Ovary (tissue), 10 donors: ENCODE measurements at regions of chr7 and their contacts with region 1.

Region 1: DNA sequence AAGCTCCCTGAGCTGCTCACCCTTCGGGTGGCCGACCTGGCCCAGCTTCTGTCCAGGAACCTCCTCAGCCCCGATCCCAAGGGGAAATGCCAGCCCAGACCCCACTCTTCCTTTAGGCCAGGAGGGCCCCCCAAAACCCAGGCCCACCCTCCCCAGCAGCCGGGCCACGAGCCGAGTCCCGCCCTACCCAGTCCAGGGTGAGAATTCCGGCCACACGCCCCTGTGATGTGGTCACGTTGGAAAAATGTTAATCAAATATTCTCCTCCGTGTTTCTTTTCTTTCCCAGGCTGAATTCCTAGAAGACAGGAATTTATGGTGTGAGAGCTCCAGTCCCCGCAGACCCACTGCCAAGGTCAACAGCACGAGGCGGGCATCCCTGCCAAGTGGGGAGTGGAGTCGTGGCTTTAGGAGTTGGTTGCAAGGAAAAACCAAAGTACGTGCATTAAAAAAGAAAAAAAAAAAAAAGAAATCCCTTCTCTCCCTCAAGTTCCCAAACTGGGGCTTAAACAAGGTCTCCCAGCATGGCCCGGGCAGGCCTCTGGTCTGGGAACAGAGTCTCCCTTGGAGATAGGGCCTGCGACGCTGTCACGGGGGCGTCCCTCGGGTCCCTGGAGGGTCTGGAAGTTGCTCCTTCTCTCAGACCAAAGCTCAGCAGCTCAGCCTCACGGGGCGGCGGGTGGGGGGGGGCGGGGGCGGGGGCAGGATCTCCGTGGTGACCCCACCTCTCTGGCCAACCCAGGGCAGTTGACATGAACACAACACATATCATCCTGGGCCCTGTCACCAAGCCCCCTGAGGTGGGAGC is 28.2 kb upstream of the ELN start:
- DNase-seq: peak; percentile 36 to 77 (median 61)
- H3K4me3 ChIP-seq: no peak overlapping the region
- H3K27ac ChIP-seq: peak overlapping the region in 1 of 2 donors; percentile 49
- H3K4me1 ChIP-seq: peaks cover 12% of the 10 kb centered on the region
- H3K27me3 ChIP-seq: no peaks in the 10 kb centered on the region
- CTCF ChIP-seq: no peak
- EP300 ChIP-seq: no peak
- POLR2A ChIP-seq: no peak

Region 2: GRCh38 chr7:73703757-73704639 is 295.8 kb before region 1 on chr7:
- intact Hi-C with region 1: no loop called
- DNase-seq: peak; percentile 78 to 86 (median 80)
- H3K4me3 ChIP-seq: peak overlapping the region; percentile 28
- H3K27ac ChIP-seq: peak overlapping the region in 1 of 2 donors; percentile 73
- H3K4me1 ChIP-seq: peaks cover 12% of the 10 kb centered on the region
- H3K27me3 ChIP-seq: no peaks in the 10 kb centered on the region
- CTCF ChIP-seq: no peak
- EP300 ChIP-seq: no peak
- POLR2A ChIP-seq: no peak

Region 3: GRCh38 chr7:73894733-73895551 is 104.9 kb before region 1 on chr7:
- intact Hi-C with region 1: loop called in 1 of 4 experiments (anchors 10 kb)
- DNase-seq: peak in 2 of 5 donors; percentile 49 to 62
- H3K4me3 ChIP-seq: no peak overlapping the region
- H3K27ac ChIP-seq: no peak overlapping the region
- H3K4me1 ChIP-seq: peaks cover 4% of the 10 kb centered on the region
- H3K27me3 ChIP-seq: no peaks in the 10 kb centered on the region
- CTCF ChIP-seq: no peak
- EP300 ChIP-seq: no peak
- POLR2A ChIP-seq: no peak

Region 4: DNA sequence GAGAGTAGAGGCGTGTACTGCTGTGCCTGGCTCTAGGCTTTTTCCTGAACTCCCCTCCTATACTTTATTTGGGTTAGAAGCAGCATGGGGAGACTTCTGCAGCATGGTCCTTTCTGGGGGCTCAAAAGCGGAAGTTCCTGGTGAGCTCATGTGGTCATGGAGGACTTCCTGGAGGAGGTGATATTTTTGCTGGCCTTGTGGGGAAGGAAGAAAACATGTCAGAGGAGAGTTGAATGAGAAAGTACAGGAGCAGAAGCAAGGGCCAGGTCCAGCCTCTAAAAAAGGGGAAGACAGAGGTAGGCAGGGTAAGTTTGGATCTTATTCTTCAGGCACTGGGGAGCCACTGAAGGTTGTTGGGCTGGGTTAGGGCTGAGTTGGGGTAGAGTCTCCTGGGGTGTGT is 1010.2 kb after region 1 on chr7:
- intact Hi-C with region 1: no loop called
- DNase-seq: no peak
- H3K4me3 ChIP-seq: no peak overlapping the region
- H3K27ac ChIP-seq: no peak overlapping the region
- H3K4me1 ChIP-seq: peaks cover 3% of the 10 kb centered on the region
- H3K27me3 ChIP-seq: no peaks in the 10 kb centered on the region
- CTCF ChIP-seq: no peak
- EP300 ChIP-seq: no peak
- POLR2A ChIP-seq: no peak